T-cell (primary cell): ENCODE measurements at regions of chr1 and their contacts with region 1.

Region 1: DNA sequence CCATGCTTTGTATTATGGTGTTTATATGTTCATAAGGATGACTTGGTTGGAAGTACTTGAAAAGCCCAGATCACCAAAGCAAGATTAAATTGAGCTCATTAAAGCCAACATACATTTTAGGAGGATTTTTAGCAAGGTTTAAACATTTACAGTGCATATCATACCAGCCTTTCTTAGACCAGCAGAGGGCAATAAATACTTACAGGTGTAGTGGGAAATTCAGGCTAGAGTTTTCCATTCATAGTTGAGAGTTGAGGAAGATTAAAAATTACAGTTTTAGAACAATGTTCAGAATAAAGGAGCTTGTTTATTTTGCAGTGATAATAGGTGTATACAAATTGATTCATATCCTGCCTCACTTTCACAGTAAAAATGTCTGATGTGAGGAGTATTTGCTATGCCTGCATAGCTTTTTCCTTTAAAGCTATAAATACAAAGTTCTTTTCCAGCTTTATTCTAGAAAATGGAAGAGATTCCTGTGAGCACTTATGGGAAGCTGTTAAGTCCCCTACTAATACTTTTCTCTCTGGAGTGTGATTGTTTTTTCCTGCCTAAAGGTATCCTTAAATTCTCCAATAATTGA is 35.3 kb downstream of the DTL start:
- DNase-seq: peak in 1 of 35 experiments; percentile 68
- ATAC-seq: peak; percentile 58 to 75 (median 68)
- H3K4me3 ChIP-seq: no peak overlapping the region
- H3K4me3 Mint-ChIP-seq: no peak overlapping the region
- H3K27ac ChIP-seq: no peak overlapping the region
- H3K27ac Mint-ChIP-seq: no peak overlapping the region
- H3K4me1 ChIP-seq: no peaks in the 10 kb centered on the region
- H3K4me1 Mint-ChIP-seq: no peaks in the 10 kb centered on the region
- H3K27me3 ChIP-seq: no peaks in the 10 kb centered on the region
- H3K27me3 Mint-ChIP-seq: no peaks in the 10 kb centered on the region

Region 2: GRCh38 chr1:211680752-211681327 is 390.0 kb before region 1 on chr1:
- CTCF ChIA-PET with region 1: interaction called, 7 to 26 read pairs
- POLR2A ChIA-PET with region 1: no interaction called
- DNase-seq: peak; percentile 30 to 91 (median 70)
- ATAC-seq: peak; percentile 91 to 96 (median 92)
- H3K4me3 ChIP-seq: no peak overlapping the region
- H3K4me3 Mint-ChIP-seq: peak overlapping the region in 2 of 3 donors; percentile 14 to 40
- H3K27ac ChIP-seq: peak overlapping the region; percentile 89
- H3K27ac Mint-ChIP-seq: peak overlapping the region; percentile 84 to 94
- H3K4me1 ChIP-seq: peaks cover 9 to 22% of the 10 kb centered on the region in 2 experiments
- H3K4me1 Mint-ChIP-seq: peaks cover 14 to 24% (median 20%) of the 10 kb centered on the region in 3 donors
- H3K27me3 ChIP-seq: no peaks in the 10 kb centered on the region
- H3K27me3 Mint-ChIP-seq: no peaks in the 10 kb centered on the region

Region 3: GRCh38 chr1:212012034-212012740 is 58.6 kb before region 1 on chr1:
- CTCF ChIA-PET with region 1: no interaction called
- POLR2A ChIA-PET with region 1: no interaction called
- DNase-seq: peak; percentile 14 to 79 (median 50)
- ATAC-seq: peak; percentile 90 to 99 (median 92)
- H3K4me3 ChIP-seq: no peak overlapping the region
- H3K4me3 Mint-ChIP-seq: no peak overlapping the region
- H3K27ac ChIP-seq: no peak overlapping the region
- H3K27ac Mint-ChIP-seq: no peak overlapping the region
- H3K4me1 ChIP-seq: no peaks in the 10 kb centered on the region
- H3K4me1 Mint-ChIP-seq: peaks cover 0 to 2% (median 0%) of the 10 kb centered on the region in 3 donors
- H3K27me3 ChIP-seq: no peaks in the 10 kb centered on the region
- H3K27me3 Mint-ChIP-seq: no peaks in the 10 kb centered on the region

Region 4: DNA sequence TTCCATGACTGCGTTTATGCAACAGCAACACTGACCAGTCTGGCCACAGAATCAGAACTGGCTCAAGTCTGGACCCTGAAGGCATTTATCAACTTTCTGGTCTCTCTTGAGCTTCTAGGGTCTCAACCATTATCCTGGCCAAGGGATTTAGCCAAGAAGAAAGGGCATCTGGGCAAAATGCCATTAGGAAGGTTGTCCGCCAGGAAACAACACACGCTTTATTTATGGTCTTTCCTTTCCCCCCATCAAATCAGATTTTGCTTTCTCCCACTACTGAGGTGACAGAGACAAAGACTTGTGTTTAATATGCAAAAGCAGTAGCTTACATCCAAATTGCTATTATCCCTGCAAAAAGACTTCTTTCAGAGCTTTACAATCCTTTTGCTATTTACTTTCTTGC is 132.8 kb after region 1 on chr1:
- CTCF ChIA-PET with region 1: no interaction called
- POLR2A ChIA-PET with region 1: no interaction called
- DNase-seq: no peak
- ATAC-seq: no peak
- H3K4me3 ChIP-seq: no peak overlapping the region
- H3K4me3 Mint-ChIP-seq: no peak overlapping the region
- H3K27ac ChIP-seq: no peak overlapping the region
- H3K27ac Mint-ChIP-seq: no peak overlapping the region
- H3K4me1 ChIP-seq: peaks cover 0 to 3% of the 10 kb centered on the region in 2 experiments
- H3K4me1 Mint-ChIP-seq: peaks cover 0 to 9% (median 7%) of the 10 kb centered on the region in 3 donors
- H3K27me3 ChIP-seq: no peaks in the 10 kb centered on the region
- H3K27me3 Mint-ChIP-seq: no peaks in the 10 kb centered on the region

Region 5: DNA sequence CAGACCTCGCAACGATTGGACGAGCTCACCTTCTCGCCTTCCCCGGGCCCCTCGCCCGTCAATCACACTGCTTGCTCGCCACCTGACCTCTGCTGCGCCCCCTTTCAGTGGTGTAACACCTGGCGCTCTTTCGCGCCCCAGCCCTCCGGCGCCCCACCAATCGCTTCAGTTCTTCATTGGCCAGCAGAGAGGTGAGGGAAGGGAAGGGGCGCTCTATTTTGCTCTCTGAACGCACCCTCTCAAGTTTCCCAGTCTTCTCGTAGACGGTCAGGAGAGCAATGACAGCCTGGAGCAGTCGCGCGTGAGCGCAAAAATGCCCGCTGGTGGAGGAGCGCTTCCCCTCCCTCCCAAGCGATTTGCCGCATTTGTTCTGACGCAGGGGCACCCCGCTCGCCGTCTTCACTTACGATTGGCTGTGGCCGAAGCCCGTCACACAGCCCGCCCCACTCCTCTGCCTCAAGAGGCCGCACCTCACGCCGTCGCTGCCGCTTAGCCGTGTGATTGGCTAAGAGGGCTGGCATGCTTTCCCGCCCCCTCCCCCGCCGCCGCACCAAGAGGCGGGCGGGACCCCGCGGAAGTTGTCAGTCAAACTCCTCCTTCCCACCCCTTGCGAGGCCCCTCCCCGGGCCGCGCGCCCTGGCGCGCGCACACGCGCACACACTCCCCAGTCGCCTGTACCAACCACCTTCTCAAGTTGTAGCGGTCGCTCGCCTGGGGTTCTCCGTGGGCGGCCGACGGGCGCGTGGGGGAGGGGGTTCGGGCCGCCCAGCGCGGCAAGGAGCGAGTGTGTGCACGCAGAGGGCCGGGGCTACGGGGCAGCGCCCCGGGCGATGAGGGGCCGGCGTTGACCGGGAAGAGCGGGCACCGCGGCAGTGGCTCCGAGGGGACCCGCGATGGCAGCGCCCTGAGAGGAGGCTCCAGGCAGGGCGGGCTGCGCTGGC is 214.2 kb after region 1 on chr1 and contains the start of gene PPP2R5A:
- CTCF ChIA-PET with region 1: interaction called, 8 to 68 read pairs
- POLR2A ChIA-PET with region 1: interaction called in 1 of 2 experiments, 3 read pairs
- DNase-seq: peak; percentile 96 to 100 (median 99)
- ATAC-seq: peak; percentile 85 to 90 (median 86)
- H3K4me3 ChIP-seq: peak within 1 kb of the TSS; percentile 97 to 99
- H3K4me3 Mint-ChIP-seq: peak within 1 kb of the TSS; percentile 95 to 99 (median 97)
- H3K27ac ChIP-seq: peak within 1 kb of the TSS; percentile 87
- H3K27ac Mint-ChIP-seq: peak within 1 kb of the TSS; percentile 96 to 97
- H3K4me1 ChIP-seq: peaks cover 22 to 30% of the 10 kb centered on the region in 2 experiments
- H3K4me1 Mint-ChIP-seq: peaks cover 37 to 56% (median 41%) of the 10 kb centered on the region in 3 donors
- H3K27me3 ChIP-seq: peaks cover 0 to 2% of the 10 kb centered on the region in 2 experiments
- H3K27me3 Mint-ChIP-seq: no peaks in the 10 kb centered on the region
- total RNA-seq, gene PPP2R5A: 40.4 to 51.1 (median 46.7) TPM

Region 6: DNA sequence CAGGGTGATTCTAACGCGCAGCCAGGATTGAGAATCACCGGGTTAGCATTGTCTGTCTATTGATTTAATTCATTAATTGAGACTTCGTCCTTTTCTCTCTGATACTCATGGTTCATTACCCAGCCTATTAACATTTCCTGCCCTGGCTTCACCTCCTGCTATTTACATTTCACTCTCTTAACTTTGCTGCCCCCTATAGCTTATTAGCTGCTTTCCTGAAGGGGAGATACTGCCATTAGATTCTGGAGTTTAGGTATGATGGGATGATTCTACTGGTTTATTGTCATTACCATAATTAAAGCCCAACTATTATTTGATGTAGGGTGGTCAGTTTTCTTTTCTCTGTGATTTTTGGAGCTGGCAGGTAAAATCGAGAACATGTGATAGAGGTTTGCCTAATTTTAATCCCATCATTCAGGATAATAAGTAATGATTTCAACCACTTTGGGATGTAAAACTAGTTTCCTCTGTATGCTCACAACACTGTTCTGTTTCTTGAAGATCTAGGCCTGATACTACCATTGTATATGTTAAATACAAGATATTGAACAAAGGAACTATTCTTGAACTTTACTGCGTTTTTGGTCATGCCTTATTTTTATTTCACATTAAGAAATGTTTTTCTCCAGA is 220.8 kb after region 1 on chr1:
- CTCF ChIA-PET with region 1: interaction called, 16 to 68 read pairs
- POLR2A ChIA-PET with region 1: interaction called in 1 of 2 experiments, 3 read pairs
- DNase-seq: peak in 3 of 35 experiments; percentile 20 to 76 (median 21)
- ATAC-seq: peak; percentile 67 to 83 (median 76)
- H3K4me3 ChIP-seq: no peak overlapping the region
- H3K4me3 Mint-ChIP-seq: peak overlapping the region; percentile 7 to 99 (median 34)
- H3K27ac ChIP-seq: no peak overlapping the region
- H3K27ac Mint-ChIP-seq: no peak overlapping the region
- H3K4me1 ChIP-seq: peaks cover 11 to 59% of the 10 kb centered on the region in 2 experiments
- H3K4me1 Mint-ChIP-seq: peaks cover 86 to 93% (median 86%) of the 10 kb centered on the region in 3 donors
- H3K27me3 ChIP-seq: no peaks in the 10 kb centered on the region
- H3K27me3 Mint-ChIP-seq: no peaks in the 10 kb centered on the region

Region 7: DNA sequence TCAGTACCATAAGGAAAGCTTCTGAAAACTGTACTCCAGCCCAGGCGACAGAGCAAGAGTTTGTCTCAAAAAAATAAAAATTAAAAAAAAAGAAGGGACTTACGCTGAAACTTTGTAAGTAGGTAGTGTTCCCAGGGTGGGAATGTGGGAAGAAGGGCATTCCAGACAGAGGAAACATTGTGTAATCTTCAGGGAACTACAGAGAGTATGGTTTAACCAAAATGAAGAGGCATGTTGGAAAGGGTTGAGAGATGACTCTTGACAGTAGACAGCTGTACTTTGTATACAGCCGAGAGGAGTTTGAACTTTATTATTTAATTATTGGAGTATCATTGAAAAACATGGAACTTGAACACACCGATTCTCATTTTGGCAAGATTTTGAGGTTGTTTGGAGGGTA is 257.4 kb after region 1 on chr1:
- CTCF ChIA-PET with region 1: interaction called in 1 of 2 experiments, 3 read pairs
- POLR2A ChIA-PET with region 1: interaction called in 1 of 2 experiments, 10 read pairs
- DNase-seq: no peak
- ATAC-seq: no peak
- H3K4me3 ChIP-seq: no peak overlapping the region
- H3K4me3 Mint-ChIP-seq: no peak overlapping the region
- H3K27ac ChIP-seq: no peak overlapping the region
- H3K27ac Mint-ChIP-seq: no peak overlapping the region
- H3K4me1 ChIP-seq: peaks cover 3 to 12% of the 10 kb centered on the region in 2 experiments
- H3K4me1 Mint-ChIP-seq: peaks cover 34 to 38% (median 38%) of the 10 kb centered on the region in 3 donors
- H3K27me3 ChIP-seq: no peaks in the 10 kb centered on the region
- H3K27me3 Mint-ChIP-seq: no peaks in the 10 kb centered on the region

Region 8: DNA sequence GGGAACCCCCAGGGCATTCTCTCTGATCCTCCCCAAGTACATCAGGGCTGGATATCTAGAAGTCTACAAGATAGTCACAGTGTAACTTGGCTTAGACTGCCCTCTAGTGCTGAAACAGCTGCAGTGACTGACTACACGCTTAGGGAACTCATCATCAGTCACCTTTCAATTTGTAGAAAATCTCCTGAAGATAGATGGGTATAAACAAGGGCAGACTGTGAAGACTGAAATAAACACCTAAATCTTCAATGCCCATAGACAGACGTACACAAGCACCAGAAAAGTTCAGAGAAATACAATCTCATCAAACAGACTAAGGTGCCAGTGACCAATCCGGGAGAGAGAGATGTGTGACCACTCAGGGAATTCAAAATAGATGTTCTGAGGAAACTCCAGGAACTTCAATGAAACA is 297.3 kb after region 1 on chr1:
- CTCF ChIA-PET with region 1: interaction called, 28 to 81 read pairs
- POLR2A ChIA-PET with region 1: no interaction called
- DNase-seq: peak in 33 of 35 experiments; percentile 19 to 78 (median 38)
- ATAC-seq: peak; percentile 65 to 80 (median 77)
- H3K4me3 ChIP-seq: no peak overlapping the region
- H3K4me3 Mint-ChIP-seq: no peak overlapping the region
- H3K27ac ChIP-seq: no peak overlapping the region
- H3K27ac Mint-ChIP-seq: no peak overlapping the region
- H3K4me1 ChIP-seq: peaks cover 0 to 3% of the 10 kb centered on the region in 2 experiments
- H3K4me1 Mint-ChIP-seq: peaks cover 0 to 5% (median 2%) of the 10 kb centered on the region in 3 donors
- H3K27me3 ChIP-seq: no peaks in the 10 kb centered on the region
- H3K27me3 Mint-ChIP-seq: no peaks in the 10 kb centered on the region